ENCODE measurements at regions of chrX and their contacts with region 1.

Region 1: GRCh38 chrX:29231800-29232199 is 644.6 kb downstream of the IL1RAPL1 start:
- DNase-seq: peak; percentile 25
- ATAC-seq: 0 out of 2 replicates have a peak, but pooled peaks have one; percentile 33
- H3K4me3 ChIP-seq: no peak overlapping the region
- H3K27ac ChIP-seq: no peak overlapping the region
- H3K4me1 ChIP-seq: peaks cover 18% of the 10 kb centered on the region
- H3K27me3 ChIP-seq: no peaks in the 10 kb centered on the region
- CTCF ChIP-seq: peak; percentile 53

Region 2: DNA sequence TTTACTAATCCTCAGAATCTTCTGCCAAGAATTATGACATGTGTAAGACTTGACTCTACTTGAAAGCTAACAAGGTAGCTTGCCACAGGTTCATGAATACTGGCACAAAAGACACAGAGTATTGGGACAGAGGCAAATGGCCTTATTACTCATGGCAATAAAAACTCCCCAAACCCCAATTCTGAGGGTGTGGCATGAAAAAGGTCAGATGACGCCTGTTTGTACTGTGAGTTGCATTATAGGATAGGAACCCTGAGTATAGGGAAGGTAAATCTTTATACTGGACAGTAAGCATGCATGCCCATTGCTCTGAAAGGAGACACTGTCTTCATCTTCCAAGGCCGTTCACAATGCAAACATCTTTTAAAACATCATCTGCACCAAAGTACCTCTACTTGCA is 44.5 kb before region 1 on chrX:
- CTCF ChIA-PET with region 1: no interaction called
- POLR2A ChIA-PET with region 1: no interaction called
- intact Hi-C with region 1: loop called (anchors 5 kb)
- DNase-seq: peak; percentile 67
- ATAC-seq: peak; percentile 60
- H3K4me3 ChIP-seq: no peak overlapping the region
- H3K27ac ChIP-seq: peak overlapping the region; percentile 85
- H3K4me1 ChIP-seq: peaks cover 9% of the 10 kb centered on the region
- H3K27me3 ChIP-seq: no peaks in the 10 kb centered on the region
- CTCF ChIP-seq: no peak

Measured in PC-3 (cell line).